Mammary epithelial cell (primary cell): ENCODE measurements at regions of chr13 and their contacts with region 1.

Region 1: GRCh38 chr13:79480954-79481684 is at the start of gene NDFIP2:
- DNase-seq: peak; percentile 89
- H3K4me3 ChIP-seq: peak within 1 kb of the TSS; percentile 92 to 100 (median 98)
- H3K27ac ChIP-seq: peak within 1 kb of the TSS; percentile 100
- H3K4me1 ChIP-seq: peaks cover 33% of the 10 kb centered on the region
- H3K27me3 ChIP-seq: no peaks in the 10 kb centered on the region
- CTCF ChIP-seq: peak in 1 of 2 donors; percentile 1
- total RNA-seq, gene NDFIP2: 120 TPM

Region 2: GRCh38 chr13:79423801-79424642 is 57.1 kb before region 1 on chr13:
- CTCF ChIA-PET with region 1: interaction called, 21 read pairs
- dilution Hi-C with region 1: loop called (anchors 5 kb)
- in situ Hi-C with region 1: no loop called
- intact Hi-C with region 1: loop called (anchors 2 kb)
- DNase-seq: no peak
- H3K4me3 ChIP-seq: no peak overlapping the region
- H3K27ac ChIP-seq: no peak overlapping the region
- H3K4me1 ChIP-seq: no peaks in the 10 kb centered on the region
- H3K27me3 ChIP-seq: no peaks in the 10 kb centered on the region
- CTCF ChIP-seq: peak; percentile 59 to 67

Region 3: DNA sequence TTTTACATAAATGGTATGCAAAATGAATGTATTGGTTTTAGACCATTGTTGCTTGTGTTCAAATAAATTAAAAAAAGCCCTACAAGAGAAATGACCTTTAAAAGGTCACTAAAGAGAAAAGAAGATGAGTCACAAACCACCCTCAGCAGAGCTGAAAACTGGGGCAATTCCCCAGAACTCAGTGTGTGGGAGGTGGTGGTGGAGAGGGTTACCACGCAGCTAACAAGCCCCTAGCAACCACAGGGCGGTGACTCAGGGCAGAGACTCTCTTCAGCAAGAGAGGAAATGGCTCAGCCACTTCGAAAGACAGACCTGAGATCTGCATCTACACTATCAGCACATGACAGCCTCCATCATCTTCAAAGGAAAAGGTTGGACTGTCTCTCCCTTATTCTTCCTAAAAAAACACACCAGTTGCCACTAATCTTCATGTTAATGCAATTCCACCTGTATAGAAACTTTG is 29.6 kb before region 1 on chr13:
- CTCF ChIA-PET with region 1: no interaction called
- dilution Hi-C with region 1: no loop called
- in situ Hi-C with region 1: no loop called
- intact Hi-C with region 1: no loop called
- DNase-seq: peak; percentile 93
- H3K4me3 ChIP-seq: no peak overlapping the region
- H3K27ac ChIP-seq: peak overlapping the region; percentile 26
- H3K4me1 ChIP-seq: peaks cover 8% of the 10 kb centered on the region
- H3K27me3 ChIP-seq: no peaks in the 10 kb centered on the region
- CTCF ChIP-seq: no peak

Region 4: GRCh38 chr13:79491715-79492114 is 10.6 kb after region 1 on chr13:
- CTCF ChIA-PET with region 1: no interaction called
- dilution Hi-C with region 1: no loop called
- in situ Hi-C with region 1: no loop called
- intact Hi-C with region 1: loop called (anchors 1 kb)
- DNase-seq: peak; percentile 95
- H3K4me3 ChIP-seq: peak overlapping the region in 2 of 3 experiments; percentile 30 to 61
- H3K27ac ChIP-seq: peak overlapping the region; percentile 100
- H3K4me1 ChIP-seq: peaks cover 55% of the 10 kb centered on the region
- H3K27me3 ChIP-seq: no peaks in the 10 kb centered on the region
- CTCF ChIP-seq: no peak

Region 5: GRCh38 chr13:79525064-79525857 is 44.1 kb after region 1 on chr13:
- CTCF ChIA-PET with region 1: no interaction called
- dilution Hi-C with region 1: no loop called
- in situ Hi-C with region 1: no loop called
- intact Hi-C with region 1: loop called (anchors 5 kb)
- DNase-seq: peak; percentile 72
- H3K4me3 ChIP-seq: no peak overlapping the region
- H3K27ac ChIP-seq: peak overlapping the region; percentile 19
- H3K4me1 ChIP-seq: peaks cover 27% of the 10 kb centered on the region
- H3K27me3 ChIP-seq: no peaks in the 10 kb centered on the region
- CTCF ChIP-seq: no peak

Region 6: GRCh38 chr13:79541426-79542049 is 60.4 kb after region 1 on chr13:
- CTCF ChIA-PET with region 1: interaction called, 7 read pairs
- dilution Hi-C with region 1: no loop called
- in situ Hi-C with region 1: no loop called
- intact Hi-C with region 1: loop called (anchors 1 kb)
- DNase-seq: peak; percentile 42
- H3K4me3 ChIP-seq: no peak overlapping the region
- H3K27ac ChIP-seq: no peak overlapping the region
- H3K4me1 ChIP-seq: no peaks in the 10 kb centered on the region
- H3K27me3 ChIP-seq: no peaks in the 10 kb centered on the region
- CTCF ChIP-seq: peak; percentile 58 to 71

Region 7: DNA sequence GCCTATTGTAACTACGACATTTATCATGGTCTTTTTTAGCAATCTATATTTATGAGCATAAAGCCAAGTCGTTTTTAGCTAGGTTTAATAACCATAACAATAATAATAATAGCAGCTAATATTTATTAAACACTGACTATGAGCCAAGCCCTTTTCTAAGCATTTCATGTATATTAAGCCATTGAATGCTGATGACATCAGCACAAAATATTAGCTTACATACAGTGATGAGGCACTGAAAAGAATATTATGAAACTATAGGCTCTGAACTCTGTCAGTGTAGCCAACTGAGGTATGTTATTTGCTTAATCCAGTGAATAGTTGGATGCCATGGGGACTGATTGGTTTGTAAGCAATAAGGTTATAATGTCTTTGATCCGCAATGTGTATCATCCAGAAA is 235.1 kb after region 1 on chr13:
- CTCF ChIA-PET with region 1: no interaction called
- dilution Hi-C with region 1: no loop called
- in situ Hi-C with region 1: no loop called
- intact Hi-C with region 1: no loop called
- DNase-seq: no peak
- H3K4me3 ChIP-seq: no peak overlapping the region
- H3K27ac ChIP-seq: no peak overlapping the region
- H3K4me1 ChIP-seq: peaks cover 1% of the 10 kb centered on the region
- H3K27me3 ChIP-seq: no peaks in the 10 kb centered on the region
- CTCF ChIP-seq: no peak